A673 (cell line): ENCODE measurements at regions of chr10 and their contacts with region 1.

Region 1: GRCh38 chr10:66405566-66405965 is 520.3 kb upstream of the LRRTM3 start:
- DNase-seq: no peak
- H3K4me3 ChIP-seq: no peak overlapping the region
- H3K27ac ChIP-seq: no peak overlapping the region
- H3K4me1 ChIP-seq: no peaks in the 10 kb centered on the region
- H3K27me3 ChIP-seq: no peaks in the 10 kb centered on the region
- CTCF ChIP-seq: no peak

Region 2: DNA sequence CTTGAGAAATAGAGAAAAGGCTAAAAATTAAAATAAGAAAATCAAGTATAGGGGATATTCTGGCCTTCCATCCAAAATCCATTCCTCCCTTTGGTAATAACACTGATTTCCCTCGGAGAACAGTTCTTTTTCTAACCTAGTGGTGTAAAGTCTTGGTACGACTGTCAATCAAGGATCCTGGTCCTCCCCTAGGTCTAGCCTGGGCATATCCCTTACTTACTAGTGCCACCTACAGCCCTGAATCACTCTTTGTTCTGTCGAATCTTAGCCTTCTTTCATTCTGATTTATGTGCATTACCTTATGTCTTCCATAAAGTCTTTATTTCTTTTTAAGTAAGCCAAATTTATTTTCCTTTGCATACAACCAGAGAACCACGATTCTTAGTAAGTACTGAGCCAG is 221.6 kb after region 1 on chr10:
- CTCF ChIA-PET with region 1: no interaction called
- POLR2A ChIA-PET with region 1: no interaction called
- intact Hi-C with region 1: no loop called
- DNase-seq: peak; percentile 33
- H3K4me3 ChIP-seq: no peak overlapping the region
- H3K27ac ChIP-seq: no peak overlapping the region
- H3K4me1 ChIP-seq: no peaks in the 10 kb centered on the region
- H3K27me3 ChIP-seq: no peaks in the 10 kb centered on the region
- CTCF ChIP-seq: 0 out of 2 replicates have a peak, but pooled peaks have one; percentile 34

Region 3: DNA sequence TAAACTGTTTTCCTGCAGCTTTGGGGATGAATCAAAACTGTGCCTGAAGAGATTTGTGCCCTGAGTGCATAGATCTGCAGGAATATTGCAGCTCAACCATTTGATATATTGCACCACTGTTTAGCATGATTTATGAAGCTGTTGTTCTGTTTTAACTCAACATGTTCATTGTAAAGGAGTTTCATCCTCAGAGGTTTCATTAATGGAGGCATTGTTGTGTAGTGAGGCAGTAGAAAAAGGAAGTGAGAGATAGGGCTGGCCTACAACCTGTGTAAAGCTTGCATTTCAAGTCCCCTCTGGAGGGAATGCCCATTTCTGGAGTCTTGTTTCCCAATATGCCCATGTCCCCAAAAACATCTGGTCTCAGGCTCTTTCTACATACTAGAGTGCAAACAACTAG is 1365.0 kb after region 1 on chr10:
- CTCF ChIA-PET with region 1: no interaction called
- POLR2A ChIA-PET with region 1: interaction called, 17 read pairs
- intact Hi-C with region 1: no loop called
- DNase-seq: no peak
- H3K4me3 ChIP-seq: no peak overlapping the region
- H3K27ac ChIP-seq: no peak overlapping the region
- H3K4me1 ChIP-seq: no peaks in the 10 kb centered on the region
- H3K27me3 ChIP-seq: no peaks in the 10 kb centered on the region
- CTCF ChIP-seq: no peak